ENCODE measurements at regions of chr12 and their contacts with region 1.

Region 1: GRCh38 chr12:17853054-17853453 is 236.9 kb downstream of the RERGL start:
- DNase-seq: no peak
- H3K4me3 Mint-ChIP-seq: no peak overlapping the region
- H3K27ac Mint-ChIP-seq: no peak overlapping the region
- H3K4me1 Mint-ChIP-seq: no peaks in the 10 kb centered on the region
- H3K27me3 Mint-ChIP-seq: peaks cover 5% of the 10 kb centered on the region
- CTCF ChIP-seq: no peak

Region 2: GRCh38 chr12:17456486-17456885 is 396.6 kb before region 1 on chr12:
- CTCF ChIA-PET with region 1: no interaction called
- POLR2A ChIA-PET with region 1: no interaction called
- intact Hi-C with region 1: no loop called
- DNase-seq: no peak
- H3K4me3 Mint-ChIP-seq: no peak overlapping the region
- H3K27ac Mint-ChIP-seq: no peak overlapping the region
- H3K4me1 Mint-ChIP-seq: no peaks in the 10 kb centered on the region
- H3K27me3 Mint-ChIP-seq: peaks cover 8% of the 10 kb centered on the region
- CTCF ChIP-seq: no peak

Region 3: GRCh38 chr12:17763366-17763765 is 89.7 kb before region 1 on chr12:
- CTCF ChIA-PET with region 1: no interaction called
- POLR2A ChIA-PET with region 1: no interaction called
- intact Hi-C with region 1: loop called (anchors 5 kb)
- DNase-seq: no peak
- H3K4me3 Mint-ChIP-seq: no peak overlapping the region
- H3K27ac Mint-ChIP-seq: no peak overlapping the region
- H3K4me1 Mint-ChIP-seq: no peaks in the 10 kb centered on the region
- H3K27me3 Mint-ChIP-seq: no peaks in the 10 kb centered on the region
- CTCF ChIP-seq: no peak

Region 4: GRCh38 chr12:17866802-17867201 is 13.7 kb after region 1 on chr12:
- CTCF ChIA-PET with region 1: no interaction called
- POLR2A ChIA-PET with region 1: no interaction called
- intact Hi-C with region 1: no loop called
- DNase-seq: no peak
- H3K4me3 Mint-ChIP-seq: no peak overlapping the region
- H3K27ac Mint-ChIP-seq: no peak overlapping the region
- H3K4me1 Mint-ChIP-seq: no peaks in the 10 kb centered on the region
- H3K27me3 Mint-ChIP-seq: peaks cover 17% of the 10 kb centered on the region
- CTCF ChIP-seq: no peak

Measured in MCF 10A (cell line).